ENCODE measurements at regions of chr16 and their contacts with region 1.

Region 1: GRCh38 chr16:3938848-3939624 is 58.5 kb upstream of the CREBBP start:
- DNase-seq: no peak
- H3K4me3 ChIP-seq: peak overlapping the region in 2 of 3 donors; percentile 24 to 32
- H3K27ac ChIP-seq: no peak overlapping the region
- H3K4me1 ChIP-seq: peaks cover 15 to 17% of the 10 kb centered on the region in 2 donors
- H3K27me3 ChIP-seq: no peaks in the 10 kb centered on the region
- CTCF ChIP-seq: peak; percentile 63 to 99 (median 86)
- POLR2A ChIP-seq: no peak

Region 2: GRCh38 chr16:3793161-3793576 is 145.9 kb before region 1 on chr16:
- intact Hi-C with region 1: no loop called
- DNase-seq: peak; percentile 19 to 34
- H3K4me3 ChIP-seq: no peak overlapping the region
- H3K27ac ChIP-seq: no peak overlapping the region
- H3K4me1 ChIP-seq: peaks cover 25 to 30% of the 10 kb centered on the region in 2 donors
- H3K27me3 ChIP-seq: no peaks in the 10 kb centered on the region
- CTCF ChIP-seq: no peak
- POLR2A ChIP-seq: no peak

Region 3: GRCh38 chr16:3807425-3808123 is 131.5 kb before region 1 on chr16:
- intact Hi-C with region 1: no loop called
- DNase-seq: no peak
- H3K4me3 ChIP-seq: no peak overlapping the region
- H3K27ac ChIP-seq: no peak overlapping the region
- H3K4me1 ChIP-seq: peaks cover 4 to 26% of the 10 kb centered on the region in 2 donors
- H3K27me3 ChIP-seq: no peaks in the 10 kb centered on the region
- CTCF ChIP-seq: no peak
- POLR2A ChIP-seq: no peak

Region 4: GRCh38 chr16:4116337-4117249 is 177.6 kb after region 1 on chr16 and contains the start of gene ADCY9:
- intact Hi-C with region 1: loop called (anchors 10 kb)
- DNase-seq: peak; percentile 83 to 84
- H3K4me3 ChIP-seq: peak within 1 kb of the TSS; percentile 66 to 69 (median 68)
- H3K27ac ChIP-seq: peak within 1 kb of the TSS; percentile 82 to 97 (median 92)
- H3K4me1 ChIP-seq: peaks cover 6 to 14% of the 10 kb centered on the region in 2 donors
- H3K27me3 ChIP-seq: no peaks in the 10 kb centered on the region
- CTCF ChIP-seq: no peak
- POLR2A ChIP-seq: peak; percentile 46 to 94
- total RNA-seq, gene ADCY9: 61.4 to 123 (median 94.1) TPM